ENCODE measurements at regions of chr2 and their contacts with region 1.

Region 1: DNA sequence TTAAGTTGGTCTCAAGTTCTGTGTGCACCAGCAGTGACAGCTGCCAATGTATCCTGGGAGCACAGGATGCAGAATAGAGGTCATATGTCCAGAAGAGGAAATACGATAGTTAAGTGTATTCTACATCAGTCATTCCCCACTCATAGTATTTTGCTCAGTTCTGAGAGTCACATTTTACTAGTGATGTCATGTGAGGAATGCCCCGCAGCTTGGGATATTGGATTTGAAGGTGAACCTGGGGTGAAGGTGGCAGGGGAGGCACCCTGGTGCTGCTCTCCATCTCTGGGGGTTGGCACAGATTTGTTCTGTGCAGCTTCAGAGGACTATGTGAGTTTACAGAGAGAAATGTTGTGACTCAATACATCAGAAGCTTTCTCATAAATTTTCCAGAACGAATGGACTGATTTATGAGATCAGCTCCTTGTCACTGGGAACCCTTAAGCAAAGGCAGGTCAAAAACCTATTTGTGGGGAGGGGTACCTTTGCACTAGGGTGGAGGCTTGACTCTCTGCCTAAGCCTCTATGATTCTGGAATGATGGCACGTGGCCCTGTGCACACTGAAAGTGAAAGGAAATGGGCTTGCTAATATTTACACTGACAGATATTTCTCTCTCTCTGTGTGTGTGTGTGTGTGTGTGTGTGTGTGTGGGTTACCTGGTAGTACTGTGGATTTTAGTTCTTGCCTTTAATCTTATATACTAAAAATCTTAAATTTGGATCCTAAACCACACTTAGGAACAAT is 95.9 kb downstream of the NEB start:
- DNase-seq: peak; percentile 31
- CTCF ChIP-seq: no peak

Region 2: DNA sequence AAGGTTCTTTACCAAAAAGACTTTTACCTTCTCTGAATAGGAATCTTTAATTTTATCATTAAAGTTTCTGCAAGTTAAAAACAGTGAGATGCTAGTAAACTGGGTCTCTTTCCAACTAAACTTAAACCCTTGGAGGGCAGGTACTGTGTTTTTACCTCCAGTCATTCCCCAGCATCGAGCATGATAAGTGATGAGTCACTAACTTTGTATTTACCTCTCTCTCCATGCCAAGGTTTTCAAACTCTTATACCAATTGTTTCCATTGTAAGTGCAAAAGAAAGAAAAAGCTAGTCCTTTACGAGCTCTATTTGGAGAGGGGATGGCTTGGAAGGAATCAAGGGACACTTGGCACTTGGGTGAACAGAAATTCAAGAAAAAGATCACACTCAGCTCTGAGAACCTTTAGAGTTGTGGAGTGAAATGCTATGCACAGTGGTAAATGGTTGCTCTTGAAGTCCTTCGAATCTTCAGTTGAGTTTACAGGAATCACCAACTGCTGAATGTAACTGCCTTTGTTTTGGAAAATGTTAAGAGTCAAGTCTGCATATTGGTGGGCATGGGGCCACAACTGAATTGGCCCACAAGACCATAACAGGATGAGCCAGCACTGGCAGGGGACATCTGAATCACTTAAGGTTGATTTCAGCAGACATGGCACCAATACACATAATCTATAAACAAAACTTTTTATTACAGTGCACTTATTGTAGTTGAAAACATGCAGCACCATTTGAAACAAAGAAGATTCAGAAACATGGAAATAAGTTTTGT is 368.4 kb before region 1 on chr2:
- in situ Hi-C with region 1: no loop called
- DNase-seq: no peak
- CTCF ChIP-seq: no peak

Region 3: GRCh38 chr2:151918308-151918707 is 279.9 kb after region 1 on chr2:
- in situ Hi-C with region 1: no loop called
- DNase-seq: no peak
- CTCF ChIP-seq: no peak

Region 4: DNA sequence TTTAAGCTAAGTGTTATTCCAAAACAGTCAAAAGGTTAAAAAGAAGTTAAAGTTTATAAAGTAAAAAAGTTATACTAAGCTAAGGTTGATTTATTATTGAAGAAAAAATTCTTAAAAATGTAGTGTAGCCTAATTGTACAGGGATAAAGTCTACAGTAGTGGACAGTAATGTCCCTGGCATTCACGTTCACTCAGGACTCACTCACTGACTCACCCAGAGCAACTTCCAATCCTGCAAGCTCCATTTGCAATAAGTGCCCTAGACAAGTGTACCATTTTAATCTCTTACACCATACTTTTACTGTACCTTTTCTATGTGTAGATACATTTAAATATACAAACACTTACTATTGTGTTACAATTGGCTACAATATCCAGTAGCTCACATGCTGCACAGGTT is 374.3 kb after region 1 on chr2:
- in situ Hi-C with region 1: loop called (anchors 25 kb)
- DNase-seq: no peak
- CTCF ChIP-seq: no peak

Measured in GM13976 (cell line).